ENCODE measurements at regions of chr10 and their contacts with region 1.

Region 1: DNA sequence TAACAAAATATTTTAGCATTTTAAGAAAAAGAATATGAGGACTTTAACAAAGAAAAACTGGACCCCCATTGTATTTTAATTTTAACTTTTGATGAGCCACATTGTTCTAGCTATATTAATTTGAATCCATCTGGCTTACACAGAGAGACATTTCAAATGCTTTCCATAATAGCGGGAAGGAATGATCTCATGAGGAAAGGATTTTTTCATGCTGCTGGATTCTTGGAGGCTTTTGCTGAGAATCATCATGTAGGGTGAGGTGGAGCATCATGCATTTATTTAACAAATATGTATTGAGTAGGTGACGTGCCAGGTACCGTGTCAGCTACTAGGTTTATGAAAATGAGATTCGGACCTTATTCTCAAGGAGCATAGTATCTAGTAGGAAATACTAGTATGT is 1006.3 kb downstream of the SORCS1 start:
- ATAC-seq: no peak
- H3K4me3 ChIP-seq: no peak overlapping the region
- H3K27ac ChIP-seq: no peak overlapping the region
- H3K4me1 ChIP-seq: no peaks in the 10 kb centered on the region

Region 2: DNA sequence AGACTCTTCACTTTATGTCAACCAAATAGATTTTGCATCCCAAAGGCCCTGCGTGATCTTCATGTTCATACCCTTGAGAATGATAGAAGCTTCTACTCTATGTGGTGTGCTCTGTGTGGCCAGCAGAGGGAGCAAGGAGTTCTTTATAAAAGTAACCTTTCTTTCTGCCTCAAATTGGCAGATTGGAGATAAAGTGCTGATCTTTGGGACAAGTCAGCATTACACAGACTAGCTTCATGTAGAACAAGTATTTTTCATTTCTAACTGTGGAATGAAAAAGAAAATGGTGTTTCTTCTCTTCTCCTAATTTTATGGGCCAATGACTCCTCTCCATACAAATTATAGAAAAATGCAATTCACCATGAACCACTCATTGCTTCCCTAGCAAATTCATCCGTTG is 207.8 kb before region 1 on chr10:
- in situ Hi-C with region 1: loop called in 2 of 9 experiments (anchors 25 kb)
- ATAC-seq: peak; percentile 28 to 74 (median 58)
- H3K4me3 ChIP-seq: no peak overlapping the region
- H3K27ac ChIP-seq: no peak overlapping the region
- H3K4me1 ChIP-seq: peaks cover 7 to 8% of the 10 kb centered on the region in 2 donors

Region 3: DNA sequence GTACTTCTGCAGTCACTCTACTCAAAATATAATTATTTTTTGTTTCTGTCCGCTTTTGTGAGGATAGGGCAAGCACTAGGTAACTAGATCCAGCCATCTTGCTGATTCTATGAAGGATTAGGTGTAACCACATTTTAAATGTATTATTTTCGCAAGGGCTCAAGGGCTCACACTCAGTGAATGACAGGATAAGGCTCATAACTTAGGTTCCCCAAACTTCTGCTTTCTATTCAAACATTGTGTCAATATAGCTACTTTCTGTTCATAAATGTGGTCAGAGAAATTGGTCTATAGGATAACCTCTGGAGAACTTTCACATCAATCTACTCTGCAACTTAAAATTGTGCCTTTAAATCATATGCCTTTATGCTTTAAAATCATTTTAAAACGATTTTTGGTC is 134.9 kb before region 1 on chr10:
- in situ Hi-C with region 1: no loop called
- ATAC-seq: no peak
- H3K4me3 ChIP-seq: no peak overlapping the region
- H3K27ac ChIP-seq: no peak overlapping the region
- H3K4me1 ChIP-seq: no peaks in the 10 kb centered on the region

Region 4: DNA sequence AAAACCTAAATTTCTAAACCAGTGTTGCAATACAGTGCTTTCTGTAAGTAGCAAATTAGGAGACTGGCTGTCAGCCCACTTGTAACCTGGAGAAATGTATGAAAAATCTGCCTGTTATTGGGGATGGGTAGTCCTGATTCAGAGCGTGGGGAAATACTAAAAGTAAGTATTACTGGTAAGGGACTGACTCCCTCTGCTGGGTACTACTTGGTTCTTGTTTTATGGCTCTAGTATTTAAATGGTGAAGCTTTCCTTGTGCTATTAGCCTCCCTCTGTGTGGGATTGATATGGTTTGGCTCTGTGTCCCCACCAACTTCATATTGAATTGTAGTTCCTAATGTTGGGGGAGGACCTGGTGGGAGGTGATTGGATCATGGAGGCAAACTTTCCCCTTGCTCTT is 120.1 kb after region 1 on chr10:
- in situ Hi-C with region 1: no loop called
- ATAC-seq: no peak
- H3K4me3 ChIP-seq: no peak overlapping the region
- H3K27ac ChIP-seq: no peak overlapping the region
- H3K4me1 ChIP-seq: peaks cover 0 to 3% of the 10 kb centered on the region in 2 donors

Measured in motor neuron (in vitro differentiated cells).